ENCODE measurements at regions of chr3 and their contacts with region 1.

Region 1: GRCh38 chr3:102229062-102229655 is 205.7 kb upstream of the ZPLD1 start:
- DNase-seq: peak; percentile 89
- H3K4me3 ChIP-seq: no peak overlapping the region
- H3K27ac ChIP-seq: no peak overlapping the region
- H3K4me1 ChIP-seq: peaks cover 38% of the 10 kb centered on the region
- H3K27me3 ChIP-seq: no peaks in the 10 kb centered on the region
- CTCF ChIP-seq: peak; percentile 97

Region 2: DNA sequence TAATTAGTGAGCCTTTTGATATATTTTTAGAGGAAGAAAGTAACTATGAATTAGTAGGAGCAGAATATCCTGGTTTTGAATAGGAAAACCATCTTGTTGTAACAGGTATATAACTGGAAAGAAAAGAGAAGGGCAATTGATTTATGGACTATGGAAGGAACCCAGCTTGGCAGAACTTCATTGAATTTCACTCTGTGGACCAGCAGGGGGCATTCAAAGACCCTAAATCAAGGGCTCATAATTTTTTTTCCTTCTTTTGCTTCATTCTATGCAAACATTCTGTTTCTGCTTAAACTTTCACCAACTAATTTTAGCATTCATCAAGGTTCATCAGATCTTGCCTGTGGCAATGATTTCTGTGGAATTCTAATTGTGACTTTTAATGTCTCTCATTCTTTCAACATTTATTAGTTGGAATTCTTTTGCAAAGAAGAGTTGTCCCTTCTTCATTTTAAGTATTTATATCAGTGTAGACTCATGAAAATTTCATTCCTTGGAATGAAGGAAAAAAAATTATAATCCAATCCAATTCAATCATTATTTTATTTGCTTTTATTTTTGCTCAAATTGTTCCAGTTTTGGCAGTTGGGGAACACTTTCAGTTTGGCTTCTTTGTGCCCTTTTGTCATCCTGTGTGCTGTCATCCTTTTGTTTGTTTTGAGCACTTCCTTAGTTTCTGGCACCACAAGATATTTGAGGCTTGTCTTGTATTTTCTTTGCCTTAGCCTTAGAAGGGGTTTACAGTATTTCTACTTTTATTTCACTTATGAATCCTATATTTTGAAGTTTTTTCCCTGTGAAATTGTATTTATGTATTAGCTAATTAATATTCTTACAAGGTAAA is 419.8 kb before region 1 on chr3:
- CTCF ChIA-PET with region 1: interaction called, 33 read pairs
- POLR2A ChIA-PET with region 1: no interaction called
- intact Hi-C with region 1: loop called (anchors 1 kb)
- DNase-seq: peak; percentile 72
- H3K4me3 ChIP-seq: no peak overlapping the region
- H3K27ac ChIP-seq: peak overlapping the region; percentile 26
- H3K4me1 ChIP-seq: peaks cover 25% of the 10 kb centered on the region
- H3K27me3 ChIP-seq: no peaks in the 10 kb centered on the region
- CTCF ChIP-seq: peak; percentile 73

Region 3: GRCh38 chr3:102240720-102241119 is 11.6 kb after region 1 on chr3:
- CTCF ChIA-PET with region 1: interaction called, 10 read pairs
- POLR2A ChIA-PET with region 1: no interaction called
- intact Hi-C with region 1: no loop called
- DNase-seq: no peak
- H3K4me3 ChIP-seq: no peak overlapping the region
- H3K27ac ChIP-seq: no peak overlapping the region
- H3K4me1 ChIP-seq: no peaks in the 10 kb centered on the region
- H3K27me3 ChIP-seq: no peaks in the 10 kb centered on the region
- CTCF ChIP-seq: no peak

Region 4: GRCh38 chr3:102466001-102466400 is 236.8 kb after region 1 on chr3:
- CTCF ChIA-PET with region 1: interaction called, 3 read pairs
- POLR2A ChIA-PET with region 1: no interaction called
- intact Hi-C with region 1: loop called (anchors 5 kb)
- DNase-seq: peak; percentile 63
- H3K4me3 ChIP-seq: no peak overlapping the region
- H3K27ac ChIP-seq: no peak overlapping the region
- H3K4me1 ChIP-seq: no peaks in the 10 kb centered on the region
- H3K27me3 ChIP-seq: no peaks in the 10 kb centered on the region
- CTCF ChIP-seq: peak; percentile 57

Region 5: DNA sequence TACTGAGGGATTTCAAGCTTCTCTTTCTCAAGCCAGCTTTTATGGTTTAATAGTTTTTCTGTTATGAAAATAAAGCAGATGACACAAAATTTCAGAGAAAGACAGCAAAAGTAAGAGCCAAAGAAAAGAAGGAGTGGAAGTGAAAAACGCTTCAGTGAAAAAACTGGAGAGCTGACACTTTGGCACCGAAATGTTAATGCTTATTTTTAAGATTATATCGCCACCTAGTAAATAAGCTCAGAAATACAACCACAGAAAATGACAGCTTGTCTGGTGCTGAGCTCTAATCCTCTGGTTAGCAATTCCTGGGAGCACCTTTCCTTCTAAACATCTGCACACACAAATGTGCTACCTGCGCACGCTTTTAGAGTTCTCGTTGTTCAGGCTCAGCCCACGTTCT is 307.3 kb after region 1 on chr3:
- CTCF ChIA-PET with region 1: interaction called, 46 read pairs
- POLR2A ChIA-PET with region 1: interaction called, 9 read pairs
- intact Hi-C with region 1: loop called (anchors 1 kb)
- DNase-seq: peak; percentile 70
- H3K4me3 ChIP-seq: no peak overlapping the region
- H3K27ac ChIP-seq: no peak overlapping the region
- H3K4me1 ChIP-seq: peaks cover 7% of the 10 kb centered on the region
- H3K27me3 ChIP-seq: no peaks in the 10 kb centered on the region
- CTCF ChIP-seq: peak; percentile 65